ENCODE measurements at regions of chr19 and their contacts with region 1.

Region 1: DNA sequence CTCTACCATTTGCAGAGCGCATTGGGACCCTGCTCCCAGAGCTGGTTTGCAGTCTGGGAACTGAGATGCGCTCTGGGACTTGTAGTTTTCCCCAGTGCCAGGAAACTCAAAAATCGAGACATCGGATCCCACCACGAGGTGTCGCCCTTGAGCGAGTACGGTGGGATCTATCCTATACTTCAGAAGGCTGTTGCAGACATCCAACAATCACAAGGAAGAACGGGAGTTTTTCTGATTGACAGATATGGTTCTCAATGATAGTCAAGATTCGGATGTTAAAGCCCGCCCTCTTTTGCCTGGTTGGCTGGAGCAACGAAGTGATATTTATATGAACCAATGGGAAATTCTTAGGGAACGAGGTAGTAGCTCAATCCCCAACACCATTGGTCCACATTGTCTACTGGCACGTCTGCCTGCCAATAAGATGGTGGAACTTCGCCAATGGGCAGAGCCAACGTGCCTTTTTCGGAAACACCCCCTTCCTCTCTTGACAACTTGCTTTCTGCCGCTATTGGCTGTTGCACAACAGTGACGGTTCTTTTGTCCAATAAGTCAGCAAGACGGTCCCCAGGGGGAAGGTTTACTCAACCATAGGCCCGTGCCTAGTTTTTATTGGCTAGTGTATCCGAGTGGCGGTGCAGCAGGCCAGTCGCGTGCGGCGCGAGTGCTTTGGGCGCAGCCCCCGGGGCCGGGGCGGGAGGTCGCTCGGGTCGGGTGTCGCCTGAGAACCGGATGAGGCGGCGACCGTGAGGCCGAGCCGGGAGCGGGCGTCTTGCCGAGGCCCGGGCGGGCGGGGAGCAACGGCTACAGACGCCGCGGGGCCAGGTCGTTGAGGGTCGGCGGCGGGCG is at the start of gene DNM2:
- DNase-seq: peak; percentile 100
- H3K4me3 ChIP-seq: peak within 1 kb of the TSS; percentile 92 to 98
- H3K27ac ChIP-seq: peak within 1 kb of the TSS; percentile 83 to 91
- H3K4me1 ChIP-seq: peaks cover 10% of the 10 kb centered on the region
- H3K27me3 ChIP-seq: no peaks in the 10 kb centered on the region
- CTCF ChIP-seq: peak; percentile 68 to 98 (median 96)
- POLR2A ChIP-seq: peak; percentile 89
- total RNA-seq, gene DNM2: 137 to 279 TPM

Region 2: GRCh38 chr19:10769533-10770491 is 52.2 kb after region 1 on chr19:
- intact Hi-C with region 1: loop called (anchors 2 kb)
- DNase-seq: no peak
- H3K4me3 ChIP-seq: no peak overlapping the region
- H3K27ac ChIP-seq: peak overlapping the region in 1 of 2 donors; percentile 57
- H3K4me1 ChIP-seq: peaks cover 13% of the 10 kb centered on the region
- H3K27me3 ChIP-seq: no peaks in the 10 kb centered on the region
- CTCF ChIP-seq: peak in 3 of 4 experiments; percentile 19 to 50 (median 36)
- POLR2A ChIP-seq: no peak

Region 3: DNA sequence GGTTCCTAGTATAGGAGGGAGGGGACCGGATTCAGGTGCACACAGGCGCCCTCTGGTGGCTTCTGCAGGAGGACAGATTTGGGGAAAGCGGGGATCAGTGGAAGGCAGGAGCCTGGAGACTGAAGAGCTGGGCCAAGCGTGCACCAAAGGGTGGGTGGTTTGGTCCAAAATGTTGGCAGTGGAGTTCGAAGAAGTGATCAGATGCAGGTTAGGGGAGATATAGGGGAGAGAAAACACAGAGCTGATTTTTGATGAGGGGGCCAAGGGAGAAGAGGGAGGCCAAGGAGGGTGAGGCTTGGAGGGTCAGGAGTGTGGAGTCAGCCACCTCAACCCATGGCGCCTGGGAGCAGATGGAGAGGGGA is 146.9 kb after region 1 on chr19:
- intact Hi-C with region 1: loop called (anchors 5 kb)
- DNase-seq: peak; percentile 83
- H3K4me3 ChIP-seq: no peak overlapping the region
- H3K27ac ChIP-seq: peak overlapping the region in 1 of 2 donors; percentile 70
- H3K4me1 ChIP-seq: no peaks in the 10 kb centered on the region
- H3K27me3 ChIP-seq: no peaks in the 10 kb centered on the region
- CTCF ChIP-seq: peak; percentile 79 to 88 (median 86)
- POLR2A ChIP-seq: no peak

Measured in prostate gland (tissue), 2 donors.